ENCODE measurements at regions of chr2 and their contacts with region 1.

Region 1: DNA sequence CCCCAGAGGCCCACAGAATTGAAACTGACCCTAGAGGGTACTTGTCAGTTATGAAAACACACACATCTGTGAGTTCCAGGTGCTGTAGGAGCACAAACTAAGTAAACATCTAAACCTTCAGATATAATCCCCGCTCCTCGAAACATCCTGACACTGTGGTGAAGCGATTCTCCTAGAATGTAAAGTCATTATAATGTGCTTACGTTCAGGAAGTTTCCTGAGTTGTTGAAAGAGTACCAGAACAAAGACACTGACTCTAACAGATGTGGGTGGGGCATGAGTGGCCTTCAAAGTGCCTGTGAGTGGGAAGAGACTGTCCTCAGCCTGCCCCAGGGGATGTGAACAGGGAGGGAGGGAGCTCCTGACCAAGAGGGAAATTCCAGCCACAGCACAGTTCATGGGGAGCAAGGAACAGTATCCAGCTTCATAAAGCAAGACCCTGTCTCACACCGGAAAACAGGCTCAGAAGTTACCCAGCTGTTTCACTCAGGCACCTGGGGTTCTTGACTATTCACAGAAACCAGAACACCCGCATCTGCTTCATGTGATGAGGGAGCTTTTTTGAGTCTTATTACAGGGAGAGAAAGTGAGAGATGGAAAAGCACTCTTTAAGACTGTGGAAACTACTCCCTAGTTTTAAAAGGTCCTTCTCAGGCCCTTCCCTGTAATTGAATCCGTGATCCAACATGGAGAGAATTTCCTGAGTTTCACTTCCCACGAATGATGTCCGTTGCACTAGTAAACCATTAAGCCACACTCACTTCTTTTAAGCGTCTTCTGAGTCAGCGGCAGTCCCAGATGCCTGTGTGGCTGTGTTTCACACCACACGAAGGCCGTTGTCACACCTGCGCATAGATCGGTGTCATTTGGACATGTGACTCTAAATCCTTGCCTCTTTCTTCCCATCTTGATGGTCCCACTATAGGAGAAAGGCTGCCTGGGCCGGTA is 88.6 kb upstream of the EML6 start:
- DNase-seq: no peak
- H3K4me3 Mint-ChIP-seq: peak overlapping the region; percentile 4
- H3K27ac Mint-ChIP-seq: peak overlapping the region; percentile 71
- H3K4me1 Mint-ChIP-seq: peaks cover 24% of the 10 kb centered on the region
- H3K27me3 Mint-ChIP-seq: no peaks in the 10 kb centered on the region

Region 2: GRCh38 chr2:54191361-54192135 is 443.3 kb before region 1 on chr2:
- CTCF ChIA-PET with region 1: no interaction called
- POLR2A ChIA-PET with region 1: no interaction called
- intact Hi-C with region 1: no loop called
- DNase-seq: no peak
- H3K4me3 Mint-ChIP-seq: no peak overlapping the region
- H3K27ac Mint-ChIP-seq: no peak overlapping the region
- H3K4me1 Mint-ChIP-seq: no peaks in the 10 kb centered on the region
- H3K27me3 Mint-ChIP-seq: no peaks in the 10 kb centered on the region

Region 3: GRCh38 chr2:54589340-54590215 is 45.3 kb before region 1 on chr2:
- CTCF ChIA-PET with region 1: no interaction called
- POLR2A ChIA-PET with region 1: no interaction called
- intact Hi-C with region 1: loop called (anchors 5 kb)
- DNase-seq: peak; percentile 60
- H3K4me3 Mint-ChIP-seq: peak overlapping the region; percentile 48
- H3K27ac Mint-ChIP-seq: peak overlapping the region; percentile 94
- H3K4me1 Mint-ChIP-seq: peaks cover 87% of the 10 kb centered on the region
- H3K27me3 Mint-ChIP-seq: no peaks in the 10 kb centered on the region

Region 4: DNA sequence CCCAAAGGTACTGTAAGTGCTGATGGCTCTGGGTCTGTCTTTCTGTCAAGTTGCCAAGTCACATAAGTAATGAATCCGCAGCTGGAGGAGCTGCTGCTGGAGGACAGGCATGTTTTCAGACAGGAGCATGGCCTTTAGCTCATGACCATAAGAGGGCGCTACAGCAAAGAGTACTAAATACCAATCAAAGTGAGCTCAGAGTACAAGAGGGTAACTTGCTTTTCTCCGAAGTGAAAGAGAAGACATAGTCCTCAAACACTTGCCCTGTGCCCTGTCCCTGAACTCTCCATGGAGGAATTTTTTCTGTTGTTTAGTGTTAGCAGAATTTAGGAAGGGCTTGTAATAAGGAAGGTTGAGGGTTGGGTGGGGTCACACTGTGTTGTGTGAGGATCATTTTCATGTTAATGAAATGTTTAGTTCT is 30.6 kb after region 1 on chr2:
- CTCF ChIA-PET with region 1: interaction called, 14 read pairs
- POLR2A ChIA-PET with region 1: no interaction called
- intact Hi-C with region 1: no loop called
- DNase-seq: peak; percentile 53
- H3K4me3 Mint-ChIP-seq: no peak overlapping the region
- H3K27ac Mint-ChIP-seq: no peak overlapping the region
- H3K4me1 Mint-ChIP-seq: peaks cover 2% of the 10 kb centered on the region
- H3K27me3 Mint-ChIP-seq: no peaks in the 10 kb centered on the region